H1 (cell line): ENCODE measurements at regions of chr3 and their contacts with region 1.

Region 1: GRCh38 chr3:33115024-33115768 is 1.4 kb downstream of the CRTAP start:
- DNase-seq: no peak
- H3K4me3 ChIP-seq: peak overlapping the region in 1 of 4 experiments; percentile 70; a peak in 2 of 8 replicates
- H3K27ac ChIP-seq: no peak overlapping the region
- H3K4me1 ChIP-seq: peaks cover 0 to 5% (median 3%) of the 10 kb centered on the region in 4 experiments; a peak in 5 of 7 replicates
- H3K27me3 ChIP-seq: no peaks in the 10 kb centered on the region
- CTCF ChIP-seq: no peak
- EP300 ChIP-seq: no peak
- POLR2A ChIP-seq: no peak
- RAD21 ChIP-seq: no peak

Region 2: GRCh38 chr3:32831791-32832190 is 283.4 kb before region 1 on chr3:
- CTCF ChIA-PET with region 1: no interaction called
- POLR2A ChIA-PET with region 1: no interaction called
- DNase-seq: no peak
- H3K4me3 ChIP-seq: peak overlapping the region in 1 of 4 experiments; percentile 57; a peak in 3 of 8 replicates
- H3K27ac ChIP-seq: no peak overlapping the region
- H3K4me1 ChIP-seq: peaks cover 7 to 36% (median 24%) of the 10 kb centered on the region in 4 experiments
- H3K27me3 ChIP-seq: no peaks in the 10 kb centered on the region
- CTCF ChIP-seq: no peak
- EP300 ChIP-seq: no peak
- POLR2A ChIP-seq: no peak
- RAD21 ChIP-seq: no peak

Region 3: GRCh38 chr3:33001889-33002288 is 113.3 kb before region 1 on chr3:
- CTCF ChIA-PET with region 1: no interaction called
- POLR2A ChIA-PET with region 1: no interaction called
- DNase-seq: no peak
- H3K4me3 ChIP-seq: no peak overlapping the region
- H3K27ac ChIP-seq: no peak overlapping the region
- H3K4me1 ChIP-seq: peaks cover 2 to 9% (median 5%) of the 10 kb centered on the region in 4 experiments; a peak in 4 of 7 replicates
- H3K27me3 ChIP-seq: no peaks in the 10 kb centered on the region
- CTCF ChIP-seq: no peak
- EP300 ChIP-seq: no peak
- POLR2A ChIP-seq: no peak
- RAD21 ChIP-seq: no peak

Region 4: GRCh38 chr3:33131331-33132018 is 16.3 kb after region 1 on chr3:
- CTCF ChIA-PET with region 1: interaction called, 12 read pairs
- POLR2A ChIA-PET with region 1: interaction called, 3 read pairs
- DNase-seq: peak; percentile 41 to 64
- H3K4me3 ChIP-seq: no peak overlapping the region
- H3K27ac ChIP-seq: no peak overlapping the region
- H3K4me1 ChIP-seq: peaks cover 0 to 6% (median 5%) of the 10 kb centered on the region in 4 experiments; a peak in 6 of 7 replicates
- H3K27me3 ChIP-seq: no peaks in the 10 kb centered on the region
- CTCF ChIP-seq: peak in 2 of 3 experiments; percentile 68 to 70; a peak in 3 of 4 replicates
- EP300 ChIP-seq: no peak
- POLR2A ChIP-seq: no peak
- RAD21 ChIP-seq: peak; percentile 90 to 91

Region 5: GRCh38 chr3:33202711-33203457 is 87.7 kb after region 1 on chr3:
- CTCF ChIA-PET with region 1: no interaction called
- POLR2A ChIA-PET with region 1: no interaction called
- DNase-seq: no peak
- H3K4me3 ChIP-seq: no peak overlapping the region
- H3K27ac ChIP-seq: no peak overlapping the region
- H3K4me1 ChIP-seq: no peaks in the 10 kb centered on the region
- H3K27me3 ChIP-seq: no peaks in the 10 kb centered on the region
- CTCF ChIP-seq: no peak
- EP300 ChIP-seq: no peak
- POLR2A ChIP-seq: no peak
- RAD21 ChIP-seq: no peak